Panc1 (cell line): ENCODE measurements at regions of chr2 and their contacts with region 1.

Region 1: GRCh38 chr2:218953481-218953881 is 6.0 kb upstream of the CDK5R2 start:
- DNase-seq: no peak
- ATAC-seq: no peak
- H3K4me3 ChIP-seq: no peak overlapping the region
- H3K27ac ChIP-seq: no peak overlapping the region
- H3K4me1 ChIP-seq: no peaks in the 10 kb centered on the region
- H3K27me3 ChIP-seq: no peaks in the 10 kb centered on the region; the same call in 1 of the 2 replicates
- CTCF ChIP-seq: peak; percentile 56; the same call in 1 of the 2 replicates

Region 2: DNA sequence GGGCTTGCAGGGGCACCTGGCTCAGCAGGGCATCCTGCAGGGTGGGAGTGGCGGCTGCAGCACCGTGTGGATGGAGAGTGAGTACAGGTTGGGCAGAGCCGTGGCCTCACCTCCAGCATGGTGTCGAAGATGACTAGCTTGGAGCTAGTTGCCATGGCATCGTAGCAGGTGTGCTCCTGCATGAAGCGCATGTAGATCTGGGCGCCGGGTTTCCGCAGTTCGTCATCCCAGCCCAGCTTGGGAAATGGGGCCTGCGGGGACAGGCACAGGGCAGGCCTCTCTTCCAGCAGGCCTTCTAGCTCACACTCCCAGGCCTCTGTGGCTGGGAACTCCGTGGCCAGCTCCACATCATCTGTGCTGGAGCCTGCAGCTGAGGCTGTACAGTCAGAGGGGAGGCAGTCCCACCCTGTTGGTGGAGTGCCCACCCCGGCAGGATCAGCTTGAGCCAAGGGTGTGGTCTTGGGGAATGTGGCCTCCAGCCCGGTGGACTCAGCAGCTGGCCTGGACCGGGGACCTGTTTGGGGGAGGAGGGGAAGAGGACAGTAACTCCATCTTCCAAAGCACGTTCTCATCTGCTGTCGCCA is 123.5 kb before region 1 on chr2:
- CTCF ChIA-PET with region 1: no interaction called
- POLR2A ChIA-PET with region 1: interaction called, 14 read pairs
- in situ Hi-C with region 1: no loop called
- intact Hi-C with region 1: no loop called
- DNase-seq: no peak
- ATAC-seq: no peak
- H3K4me3 ChIP-seq: no peak overlapping the region
- H3K27ac ChIP-seq: no peak overlapping the region
- H3K4me1 ChIP-seq: peaks cover 6% of the 10 kb centered on the region; the same call in 1 of the 2 replicates
- H3K27me3 ChIP-seq: peaks cover 2% of the 10 kb centered on the region; the same call in 1 of the 2 replicates
- CTCF ChIP-seq: no peak

Region 3: GRCh38 chr2:218870984-218871344 is 82.5 kb before region 1 on chr2:
- CTCF ChIA-PET with region 1: no interaction called
- POLR2A ChIA-PET with region 1: no interaction called
- in situ Hi-C with region 1: no loop called
- intact Hi-C with region 1: no loop called
- DNase-seq: no peak
- ATAC-seq: no peak
- H3K4me3 ChIP-seq: no peak overlapping the region
- H3K27ac ChIP-seq: no peak overlapping the region
- H3K4me1 ChIP-seq: no peaks in the 10 kb centered on the region
- H3K27me3 ChIP-seq: no peaks in the 10 kb centered on the region
- CTCF ChIP-seq: no peak

Region 4: GRCh38 chr2:218892693-218893348 is 60.7 kb before region 1 on chr2:
- CTCF ChIA-PET with region 1: no interaction called
- POLR2A ChIA-PET with region 1: no interaction called
- in situ Hi-C with region 1: no loop called
- intact Hi-C with region 1: no loop called
- DNase-seq: no peak
- ATAC-seq: peak; percentile 64
- H3K4me3 ChIP-seq: peak overlapping the region; percentile 38 to 57
- H3K27ac ChIP-seq: peak overlapping the region; percentile 80
- H3K4me1 ChIP-seq: peaks cover 51% of the 10 kb centered on the region
- H3K27me3 ChIP-seq: no peaks in the 10 kb centered on the region
- CTCF ChIP-seq: peak; percentile 89

Region 5: GRCh38 chr2:220949466-220949865 is 1996.0 kb after region 1 on chr2:
- CTCF ChIA-PET with region 1: no interaction called
- POLR2A ChIA-PET with region 1: no interaction called
- in situ Hi-C with region 1: no loop called
- intact Hi-C with region 1: no loop called
- DNase-seq: no peak
- ATAC-seq: no peak
- H3K4me3 ChIP-seq: no peak overlapping the region
- H3K27ac ChIP-seq: no peak overlapping the region
- H3K4me1 ChIP-seq: no peaks in the 10 kb centered on the region
- H3K27me3 ChIP-seq: no peaks in the 10 kb centered on the region
- CTCF ChIP-seq: no peak